ENCODE measurements at regions of chr5 and their contacts with region 1.

Region 1: GRCh38 chr5:143506881-143507551 is 103.5 kb upstream of the NR3C1 start:
- DNase-seq: peak; percentile 95
- ATAC-seq: peak; percentile 90
- H3K4me3 ChIP-seq: no peak overlapping the region
- H3K27ac ChIP-seq: peak overlapping the region; percentile 61
- H3K4me1 ChIP-seq: peaks cover 11% of the 10 kb centered on the region
- H3K27me3 ChIP-seq: no peaks in the 10 kb centered on the region
- CTCF ChIP-seq: peak; percentile 27; the same call in 1 of the 2 replicates
- POLR2A ChIP-seq: no peak
- RAD21 ChIP-seq: peak; percentile 43

Region 2: GRCh38 chr5:143033535-143034250 is 473.3 kb before region 1 on chr5:
- CTCF ChIA-PET with region 1: no interaction called
- POLR2A ChIA-PET with region 1: no interaction called
- dilution Hi-C with region 1: no loop called
- in situ Hi-C with region 1: no loop called
- intact Hi-C with region 1: loop called (anchors 5 kb)
- DNase-seq: peak; percentile 95
- ATAC-seq: peak; percentile 94
- H3K4me3 ChIP-seq: no peak overlapping the region
- H3K27ac ChIP-seq: no peak overlapping the region
- H3K4me1 ChIP-seq: peaks cover 2% of the 10 kb centered on the region; the same call in 1 of the 2 replicates
- H3K27me3 ChIP-seq: peaks cover 11% of the 10 kb centered on the region
- CTCF ChIP-seq: no peak
- POLR2A ChIP-seq: no peak
- RAD21 ChIP-seq: peak; percentile 8; the same call in 1 of the 2 replicates

Region 3: GRCh38 chr5:143629871-143630659 is 123.0 kb after region 1 on chr5:
- CTCF ChIA-PET with region 1: no interaction called
- POLR2A ChIA-PET with region 1: no interaction called
- dilution Hi-C with region 1: no loop called
- in situ Hi-C with region 1: no loop called
- intact Hi-C with region 1: no loop called
- DNase-seq: peak; percentile 86
- ATAC-seq: peak; percentile 89
- H3K4me3 ChIP-seq: no peak overlapping the region
- H3K27ac ChIP-seq: no peak overlapping the region
- H3K4me1 ChIP-seq: peaks cover 5% of the 10 kb centered on the region; the same call in 1 of the 2 replicates
- H3K27me3 ChIP-seq: no peaks in the 10 kb centered on the region
- CTCF ChIP-seq: no peak
- POLR2A ChIP-seq: no peak
- RAD21 ChIP-seq: no peak

Measured in IMR-90 (cell line).